ENCODE measurements at regions of chr1 and their contacts with region 1.

Region 1: DNA sequence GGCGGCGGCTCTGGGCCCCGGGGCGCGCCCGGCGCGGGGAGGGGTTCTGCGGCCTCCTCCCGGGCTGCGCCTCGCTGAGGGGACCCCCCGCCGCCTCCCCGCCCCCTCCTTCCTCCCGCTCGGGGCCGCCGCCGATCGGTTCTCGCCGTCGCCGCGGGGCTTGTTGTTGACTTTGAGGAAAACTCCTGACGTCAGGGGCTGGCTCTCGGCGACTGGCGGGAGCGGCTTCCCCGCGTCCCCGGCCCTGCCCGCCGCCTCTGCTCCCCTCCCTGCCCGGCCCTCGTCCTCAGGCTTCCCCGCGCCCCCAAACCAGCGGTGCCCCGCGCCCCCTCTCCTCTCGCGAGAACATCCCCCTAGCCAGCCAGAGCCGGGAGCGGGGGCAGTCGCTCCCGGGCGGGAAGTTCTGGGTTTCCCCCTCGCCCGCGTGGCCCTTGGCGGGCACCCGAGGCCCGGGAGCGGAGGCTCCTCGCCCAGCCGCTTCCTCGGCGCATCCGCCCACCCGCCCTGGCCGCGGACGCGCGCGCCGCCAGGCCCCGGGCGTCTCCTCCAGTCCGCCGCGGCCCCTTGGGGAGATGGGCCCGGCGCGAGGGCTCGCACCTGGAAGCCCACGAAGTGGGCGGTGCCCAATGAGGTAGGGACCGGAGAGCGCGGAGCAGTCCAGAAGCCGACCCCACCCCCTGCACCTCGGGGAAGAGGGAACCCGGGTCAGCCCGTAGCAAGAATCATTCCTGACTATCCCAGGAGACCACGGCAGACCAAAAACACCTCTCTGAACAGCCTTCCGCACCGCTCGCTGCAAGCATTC is 611 bp upstream of the AKT3 start:
- DNase-seq: peak; percentile 79 to 88 (median 84)
- ATAC-seq: peak; percentile 64
- H3K4me3 ChIP-seq: peak overlapping the region; percentile 75
- H3K4me3 Mint-ChIP-seq: peak overlapping the region; percentile 90 to 97 (median 93)
- H3K27ac ChIP-seq: peak overlapping the region; percentile 97
- H3K27ac Mint-ChIP-seq: peak overlapping the region; percentile 88 to 99 (median 93)
- H3K4me1 ChIP-seq: peaks cover 4 to 5% of the 10 kb centered on the region in 2 donors
- H3K4me1 Mint-ChIP-seq: peaks cover 8 to 47% (median 30%) of the 10 kb centered on the region in 7 donors
- H3K27me3 ChIP-seq: no peaks in the 10 kb centered on the region
- H3K27me3 Mint-ChIP-seq: peaks cover 0 to 59% (median 0%) of the 10 kb centered on the region in 5 donors

Region 2: DNA sequence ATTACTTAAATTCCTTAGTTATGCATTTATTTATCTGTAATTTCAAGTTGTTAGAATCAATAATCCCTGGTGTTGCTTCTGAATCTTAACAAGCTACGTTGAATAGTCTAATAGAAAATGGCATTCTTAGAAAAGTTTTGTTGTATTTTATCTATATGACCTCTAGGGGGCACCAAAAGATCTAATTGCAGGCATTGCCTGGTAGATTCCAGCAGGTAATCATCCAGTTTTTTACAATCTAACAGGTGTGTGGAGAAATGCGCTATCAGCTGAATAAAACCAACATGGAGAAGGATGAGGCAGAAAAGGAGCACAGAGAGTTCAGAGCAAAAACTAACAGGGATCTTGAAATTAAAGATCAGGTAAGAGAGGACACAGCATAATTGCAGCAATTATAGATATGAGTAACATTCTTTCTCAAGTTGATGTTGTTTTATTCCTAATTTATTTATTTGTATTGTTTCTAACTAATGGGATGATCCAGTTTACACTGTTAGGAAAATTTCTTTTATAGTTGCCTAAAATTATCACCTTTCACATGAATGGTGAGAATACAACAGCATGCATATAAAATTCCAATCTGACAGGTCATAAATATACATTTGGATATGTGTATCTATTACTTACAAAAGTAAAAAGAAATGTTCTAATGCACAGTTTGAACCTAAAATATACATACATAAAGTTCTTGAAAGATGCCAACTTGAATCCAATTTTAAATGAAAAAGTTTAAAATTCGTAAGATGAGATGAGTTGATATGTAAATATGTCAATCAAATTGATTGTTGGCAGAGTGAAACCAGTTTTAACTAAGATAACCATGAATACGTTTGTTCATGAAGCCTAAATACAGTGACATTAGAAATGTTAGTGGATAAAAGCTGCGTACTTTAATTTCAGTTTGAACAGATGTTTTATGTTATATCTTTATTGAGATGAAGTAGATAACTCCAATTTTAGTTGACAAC is 506.4 kb before region 1 on chr1:
- CTCF ChIA-PET with region 1: no interaction called
- POLR2A ChIA-PET with region 1: no interaction called
- intact Hi-C with region 1: loop called in 1 of 2 experiments (anchors 2 kb)
- DNase-seq: peak in 7 of 9 donors; percentile 22 to 65 (median 51)
- ATAC-seq: peak; percentile 64
- H3K4me3 ChIP-seq: no peak overlapping the region
- H3K4me3 Mint-ChIP-seq: no peak overlapping the region
- H3K27ac ChIP-seq: no peak overlapping the region
- H3K27ac Mint-ChIP-seq: no peak overlapping the region
- H3K4me1 ChIP-seq: no peaks in the 10 kb centered on the region
- H3K4me1 Mint-ChIP-seq: peaks cover 0 to 12% (median 3%) of the 10 kb centered on the region in 7 donors
- H3K27me3 ChIP-seq: no peaks in the 10 kb centered on the region
- H3K27me3 Mint-ChIP-seq: no peaks in the 10 kb centered on the region

Region 3: GRCh38 chr1:243748706-243749283 is 101.9 kb before region 1 on chr1:
- CTCF ChIA-PET with region 1: no interaction called
- POLR2A ChIA-PET with region 1: interaction called, 3 read pairs
- intact Hi-C with region 1: loop called in 1 of 2 experiments (anchors 2 kb)
- DNase-seq: peak in 7 of 9 donors; percentile 11 to 59 (median 44)
- ATAC-seq: peak; percentile 99
- H3K4me3 ChIP-seq: no peak overlapping the region
- H3K4me3 Mint-ChIP-seq: no peak overlapping the region
- H3K27ac ChIP-seq: no peak overlapping the region
- H3K27ac Mint-ChIP-seq: peak overlapping the region in 6 of 9 donors; percentile 23 to 84 (median 71)
- H3K4me1 ChIP-seq: peaks cover 0 to 12% of the 10 kb centered on the region in 2 donors
- H3K4me1 Mint-ChIP-seq: peaks cover 2 to 68% (median 39%) of the 10 kb centered on the region in 7 donors
- H3K27me3 ChIP-seq: no peaks in the 10 kb centered on the region
- H3K27me3 Mint-ChIP-seq: no peaks in the 10 kb centered on the region

Region 4: DNA sequence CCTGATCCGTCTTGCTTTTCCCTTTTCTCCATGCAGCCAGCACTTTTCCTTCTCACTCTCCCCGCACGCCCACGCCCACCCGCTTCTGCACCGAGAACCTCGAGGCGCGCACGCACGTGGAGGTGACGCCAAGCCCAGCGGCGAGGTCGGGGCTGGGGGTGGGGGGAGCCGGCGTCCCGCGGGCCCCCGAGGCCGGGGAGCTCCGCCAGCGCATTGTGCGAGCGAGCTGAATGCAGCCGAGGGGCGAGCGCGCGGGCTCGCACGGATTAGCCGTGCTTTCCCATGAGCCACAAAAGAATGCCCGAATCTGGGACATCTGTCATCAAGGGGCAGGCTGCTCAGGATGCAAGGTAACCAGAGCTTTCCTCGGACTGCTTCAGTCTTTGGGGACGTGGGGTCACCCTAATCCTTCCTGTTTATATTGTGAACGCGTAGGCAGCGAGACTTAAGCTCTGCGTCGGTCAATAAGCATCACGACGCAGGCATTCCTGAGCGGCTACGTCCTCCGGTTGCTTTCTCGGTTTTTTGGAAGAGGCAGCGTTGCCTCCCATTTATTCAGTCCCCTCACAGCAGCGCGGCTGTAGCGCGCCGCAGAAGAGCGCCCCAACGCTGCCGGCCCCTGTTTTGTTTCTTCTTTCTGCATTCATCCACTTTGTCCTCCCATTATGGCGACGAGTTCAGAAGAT is 66.7 kb after region 1 on chr1:
- CTCF ChIA-PET with region 1: no interaction called
- POLR2A ChIA-PET with region 1: no interaction called
- intact Hi-C with region 1: loop called in 1 of 2 experiments (anchors 2 kb)
- DNase-seq: peak in 6 of 9 donors; percentile 5 to 29 (median 16)
- ATAC-seq: peak; percentile 57
- H3K4me3 ChIP-seq: peak overlapping the region; percentile 71
- H3K4me3 Mint-ChIP-seq: peak overlapping the region; percentile 82 to 94 (median 86)
- H3K27ac ChIP-seq: no peak overlapping the region
- H3K27ac Mint-ChIP-seq: peak overlapping the region in 2 of 9 donors; percentile 8 to 52
- H3K4me1 ChIP-seq: peaks cover 8 to 10% of the 10 kb centered on the region in 2 donors
- H3K4me1 Mint-ChIP-seq: peaks cover 14 to 21% (median 16%) of the 10 kb centered on the region in 7 donors
- H3K27me3 ChIP-seq: peaks cover 0 to 18% of the 10 kb centered on the region in 2 donors
- H3K27me3 Mint-ChIP-seq: peaks cover 36 to 61% (median 56%) of the 10 kb centered on the region in 5 donors

Region 5: DNA sequence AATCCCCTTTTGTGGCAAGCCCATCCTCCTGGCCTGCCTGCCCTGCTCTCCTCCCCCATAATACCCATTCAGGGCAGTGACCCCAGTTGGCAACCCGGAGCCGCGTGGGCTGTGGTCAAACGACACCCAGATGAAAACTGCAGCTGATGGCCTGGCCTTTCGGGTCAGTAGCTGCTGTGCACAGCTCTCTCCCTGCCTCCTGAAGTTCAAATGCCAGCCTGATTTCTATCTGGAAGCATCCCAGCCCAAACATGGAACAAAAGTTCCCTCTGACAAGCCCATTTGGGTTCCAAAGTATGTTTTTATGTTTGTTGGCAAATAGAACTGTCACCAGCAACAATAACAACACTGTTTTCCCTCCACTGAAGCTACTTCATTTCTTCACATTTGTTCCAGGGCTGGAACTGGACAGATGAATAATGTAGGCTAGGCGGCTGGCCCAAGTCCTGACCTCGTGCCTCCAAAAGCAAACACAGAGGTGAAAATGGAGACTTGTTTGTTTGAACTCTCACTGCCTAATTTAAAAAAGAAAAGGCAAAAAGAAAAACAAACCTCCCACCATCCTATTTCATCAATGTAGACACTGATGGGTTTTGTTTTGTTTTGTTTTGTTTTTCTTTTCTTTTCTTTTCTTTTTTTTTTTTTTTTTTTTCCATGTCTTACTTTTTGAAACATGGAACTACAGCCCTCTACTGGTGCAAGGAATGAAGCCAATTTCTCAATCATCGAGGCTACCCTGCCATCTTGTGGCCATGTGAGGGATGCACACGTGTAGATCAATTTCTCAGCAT is 422.0 kb after region 1 on chr1:
- CTCF ChIA-PET with region 1: no interaction called
- POLR2A ChIA-PET with region 1: no interaction called
- intact Hi-C with region 1: loop called (anchors 1 to 5 kb)
- DNase-seq: peak; percentile 42 to 80 (median 73)
- ATAC-seq: peak; percentile 98
- H3K4me3 ChIP-seq: no peak overlapping the region
- H3K4me3 Mint-ChIP-seq: no peak overlapping the region
- H3K27ac ChIP-seq: no peak overlapping the region
- H3K27ac Mint-ChIP-seq: peak overlapping the region in 3 of 9 donors; percentile 0 to 45 (median 37)
- H3K4me1 ChIP-seq: no peaks in the 10 kb centered on the region
- H3K4me1 Mint-ChIP-seq: peaks cover 3 to 17% (median 12%) of the 10 kb centered on the region in 7 donors
- H3K27me3 ChIP-seq: no peaks in the 10 kb centered on the region
- H3K27me3 Mint-ChIP-seq: peaks cover 0 to 1% (median 0%) of the 10 kb centered on the region in 5 donors

Region 6: GRCh38 chr1:244451951-244452795 is 601.5 kb after region 1 on chr1:
- CTCF ChIA-PET with region 1: no interaction called
- POLR2A ChIA-PET with region 1: interaction called, 3 read pairs
- intact Hi-C with region 1: loop called (anchors 2 kb)
- DNase-seq: peak; percentile 93 to 99 (median 99)
- ATAC-seq: peak; percentile 94
- H3K4me3 ChIP-seq: peak overlapping the region; percentile 64
- H3K4me3 Mint-ChIP-seq: peak overlapping the region; percentile 76 to 99 (median 93)
- H3K27ac ChIP-seq: peak overlapping the region; percentile 96
- H3K27ac Mint-ChIP-seq: peak overlapping the region; percentile 85 to 99 (median 97)
- H3K4me1 ChIP-seq: peaks cover 27 to 36% of the 10 kb centered on the region in 2 donors
- H3K4me1 Mint-ChIP-seq: peaks cover 29 to 56% (median 41%) of the 10 kb centered on the region in 7 donors
- H3K27me3 ChIP-seq: no peaks in the 10 kb centered on the region
- H3K27me3 Mint-ChIP-seq: no peaks in the 10 kb centered on the region

Measured in naive thymus-derived CD4-positive, alpha-beta T cell (primary cell).